Prostate gland (tissue), 2 donors: ENCODE measurements at regions of chrX and their contacts with region 1.

Region 1: GRCh38 chrX:85611926-85612325 is 232.5 kb upstream of the POF1B start:
- DNase-seq: no peak
- H3K4me3 ChIP-seq: no peak overlapping the region
- H3K27ac ChIP-seq: no peak overlapping the region
- H3K4me1 ChIP-seq: no peaks in the 10 kb centered on the region
- H3K27me3 ChIP-seq: no peaks in the 10 kb centered on the region
- CTCF ChIP-seq: peak in 1 of 4 experiments; percentile 9
- POLR2A ChIP-seq: no peak

Region 2: DNA sequence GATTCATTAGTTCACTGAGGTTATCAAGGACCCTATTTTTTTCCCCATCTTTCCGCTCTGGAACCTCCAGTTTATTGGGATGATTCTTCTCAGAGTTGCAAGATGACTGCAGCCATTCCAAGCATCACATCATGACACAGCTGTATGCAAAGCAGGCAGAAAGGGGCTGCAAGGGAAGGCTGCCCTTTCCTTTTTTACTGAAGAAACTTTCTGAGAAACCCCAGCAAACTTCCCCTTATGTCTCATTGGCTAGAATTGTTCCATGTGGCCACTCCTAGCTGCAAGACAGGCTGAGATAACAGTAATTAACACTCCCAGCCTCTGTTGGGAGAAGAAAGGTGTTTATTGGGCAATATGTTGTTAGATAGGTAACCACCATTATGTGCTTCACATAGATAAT is 471.0 kb before region 1 on chrX:
- intact Hi-C with region 1: no loop called
- DNase-seq: no peak
- H3K4me3 ChIP-seq: no peak overlapping the region
- H3K27ac ChIP-seq: no peak overlapping the region
- H3K4me1 ChIP-seq: no peaks in the 10 kb centered on the region
- H3K27me3 ChIP-seq: no peaks in the 10 kb centered on the region
- CTCF ChIP-seq: no peak
- POLR2A ChIP-seq: no peak

Region 3: GRCh38 chrX:85516131-85516530 is 95.8 kb before region 1 on chrX:
- intact Hi-C with region 1: no loop called
- DNase-seq: no peak
- H3K4me3 ChIP-seq: no peak overlapping the region
- H3K27ac ChIP-seq: no peak overlapping the region
- H3K4me1 ChIP-seq: no peaks in the 10 kb centered on the region
- H3K27me3 ChIP-seq: no peaks in the 10 kb centered on the region
- CTCF ChIP-seq: no peak
- POLR2A ChIP-seq: no peak

Region 4: GRCh38 chrX:86946569-86946968 is 1334.6 kb after region 1 on chrX:
- intact Hi-C with region 1: loop called (anchors 10 kb)
- DNase-seq: no peak
- H3K4me3 ChIP-seq: no peak overlapping the region
- H3K27ac ChIP-seq: no peak overlapping the region
- H3K4me1 ChIP-seq: no peaks in the 10 kb centered on the region
- H3K27me3 ChIP-seq: no peaks in the 10 kb centered on the region
- CTCF ChIP-seq: peak in 1 of 4 experiments; percentile 34
- POLR2A ChIP-seq: no peak